ENCODE measurements at regions of chr9 and their contacts with region 1.

Region 1: DNA sequence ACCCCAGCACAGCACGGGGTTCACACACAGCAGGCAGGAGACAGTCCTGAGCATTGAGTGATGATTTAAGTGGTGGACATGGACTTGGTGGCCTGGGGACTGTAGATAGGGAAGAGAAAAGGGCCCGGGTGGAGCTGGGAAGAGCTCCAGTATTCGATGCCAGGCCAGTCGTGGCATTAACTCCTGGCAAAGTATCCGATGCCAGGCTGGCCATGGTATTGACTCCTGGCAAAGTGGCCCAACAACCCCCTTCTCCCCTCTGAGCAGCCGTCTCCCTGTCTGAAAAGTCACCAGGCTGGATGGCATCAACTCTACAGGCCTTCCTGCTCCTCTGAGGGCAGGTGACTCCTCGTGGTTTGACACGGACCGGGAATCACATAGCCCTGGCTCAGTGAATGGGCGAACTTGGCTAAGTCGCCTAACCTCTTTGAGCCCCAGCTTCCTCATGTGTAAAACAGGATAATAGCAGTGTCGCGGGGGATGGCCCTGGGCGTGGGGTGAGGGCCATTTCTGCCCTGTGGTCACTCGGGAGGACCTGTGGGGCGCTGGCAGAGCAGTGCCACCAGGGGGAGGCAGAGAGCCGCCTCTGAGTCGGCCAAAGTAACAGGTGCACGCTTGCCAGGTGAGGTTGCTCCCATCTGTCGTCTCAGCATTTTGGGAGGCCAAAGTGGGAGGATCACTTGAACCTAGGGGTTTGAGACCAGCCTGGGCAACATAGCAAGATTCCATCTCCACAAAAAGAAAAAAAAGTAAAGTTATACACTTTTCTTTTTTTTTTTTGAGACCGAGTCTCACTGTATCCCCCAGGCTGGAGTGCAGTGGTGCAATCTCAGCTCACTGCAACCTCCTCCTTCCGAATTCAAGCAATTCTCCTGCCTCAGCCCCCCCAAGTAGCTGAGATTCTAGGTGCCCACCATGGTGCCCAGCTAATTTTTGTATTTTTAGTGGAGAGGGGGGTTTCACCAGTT is 5.7 kb upstream of the SEC16A start:
- DNase-seq: peak; percentile 75 to 92
- ATAC-seq: peak; percentile 64
- H3K4me3 ChIP-seq: no peak overlapping the region
- H3K27ac ChIP-seq: no peak overlapping the region
- H3K4me1 ChIP-seq: no peaks in the 10 kb centered on the region
- H3K27me3 ChIP-seq: no peaks in the 10 kb centered on the region

Region 2: GRCh38 chr9:136474974-136475865 is 13.3 kb before region 1 on chr9:
- intact Hi-C with region 1: no loop called
- DNase-seq: no peak
- ATAC-seq: no peak
- H3K4me3 ChIP-seq: no peak overlapping the region
- H3K27ac ChIP-seq: no peak overlapping the region
- H3K4me1 ChIP-seq: no peaks in the 10 kb centered on the region
- H3K27me3 ChIP-seq: no peaks in the 10 kb centered on the region

Region 3: DNA sequence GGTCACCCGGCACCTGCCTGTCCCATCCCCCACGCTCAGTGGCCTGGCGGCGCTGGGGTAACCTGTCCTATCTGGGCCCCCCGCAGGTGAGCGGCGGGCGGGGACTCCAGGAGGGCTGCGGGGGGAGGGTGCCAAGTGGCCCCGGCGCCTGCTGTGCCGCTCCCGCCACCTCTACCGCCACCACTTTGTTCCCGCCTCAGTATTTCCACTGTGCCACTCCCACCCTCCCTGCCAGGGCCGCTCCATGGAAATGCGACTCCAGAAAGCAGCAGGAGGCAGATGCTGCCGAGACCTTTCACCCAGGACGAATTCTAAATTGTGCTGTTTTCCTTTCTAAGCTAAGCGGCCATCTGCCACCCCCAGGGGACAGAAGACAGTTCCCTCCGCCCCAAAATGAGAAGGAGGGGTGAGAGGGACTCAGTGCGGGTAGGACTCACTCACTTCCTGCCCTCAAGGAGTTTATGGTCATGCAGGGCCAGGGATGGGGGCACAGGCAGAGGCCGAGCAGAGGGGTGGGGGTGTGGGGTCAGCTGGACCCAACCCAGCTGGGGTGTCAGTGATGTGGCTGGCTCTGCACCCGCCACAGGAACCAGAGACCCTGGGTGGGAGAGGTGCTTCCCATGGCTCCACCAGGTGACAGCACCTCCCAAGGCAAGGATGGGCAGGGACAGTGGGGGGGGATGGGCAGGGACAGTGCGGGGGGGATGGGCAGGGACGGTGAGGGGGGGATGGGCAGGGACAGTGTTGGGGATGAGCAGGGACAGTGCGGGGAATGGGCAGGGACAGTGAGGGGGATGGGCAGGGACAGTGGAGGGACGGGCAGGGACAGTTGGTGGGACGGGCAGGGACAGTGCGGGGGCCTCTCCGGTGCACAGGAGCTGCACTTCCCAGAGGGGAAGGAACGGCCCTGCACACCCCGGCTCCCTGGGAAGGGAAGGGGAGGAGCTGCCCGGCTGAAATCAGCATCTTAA is 39.5 kb after region 1 on chr9:
- intact Hi-C with region 1: loop called (anchors 2 to 5 kb)
- DNase-seq: no peak
- ATAC-seq: no peak
- H3K4me3 ChIP-seq: no peak overlapping the region
- H3K27ac ChIP-seq: no peak overlapping the region
- H3K4me1 ChIP-seq: no peaks in the 10 kb centered on the region
- H3K27me3 ChIP-seq: no peaks in the 10 kb centered on the region

Region 4: GRCh38 chr9:136587145-136587943 is 98.8 kb after region 1 on chr9:
- intact Hi-C with region 1: no loop called
- DNase-seq: peak in 1 of 2 donors; percentile 86
- ATAC-seq: no peak
- H3K4me3 ChIP-seq: no peak overlapping the region
- H3K27ac ChIP-seq: no peak overlapping the region
- H3K4me1 ChIP-seq: no peaks in the 10 kb centered on the region
- H3K27me3 ChIP-seq: no peaks in the 10 kb centered on the region

Region 5: DNA sequence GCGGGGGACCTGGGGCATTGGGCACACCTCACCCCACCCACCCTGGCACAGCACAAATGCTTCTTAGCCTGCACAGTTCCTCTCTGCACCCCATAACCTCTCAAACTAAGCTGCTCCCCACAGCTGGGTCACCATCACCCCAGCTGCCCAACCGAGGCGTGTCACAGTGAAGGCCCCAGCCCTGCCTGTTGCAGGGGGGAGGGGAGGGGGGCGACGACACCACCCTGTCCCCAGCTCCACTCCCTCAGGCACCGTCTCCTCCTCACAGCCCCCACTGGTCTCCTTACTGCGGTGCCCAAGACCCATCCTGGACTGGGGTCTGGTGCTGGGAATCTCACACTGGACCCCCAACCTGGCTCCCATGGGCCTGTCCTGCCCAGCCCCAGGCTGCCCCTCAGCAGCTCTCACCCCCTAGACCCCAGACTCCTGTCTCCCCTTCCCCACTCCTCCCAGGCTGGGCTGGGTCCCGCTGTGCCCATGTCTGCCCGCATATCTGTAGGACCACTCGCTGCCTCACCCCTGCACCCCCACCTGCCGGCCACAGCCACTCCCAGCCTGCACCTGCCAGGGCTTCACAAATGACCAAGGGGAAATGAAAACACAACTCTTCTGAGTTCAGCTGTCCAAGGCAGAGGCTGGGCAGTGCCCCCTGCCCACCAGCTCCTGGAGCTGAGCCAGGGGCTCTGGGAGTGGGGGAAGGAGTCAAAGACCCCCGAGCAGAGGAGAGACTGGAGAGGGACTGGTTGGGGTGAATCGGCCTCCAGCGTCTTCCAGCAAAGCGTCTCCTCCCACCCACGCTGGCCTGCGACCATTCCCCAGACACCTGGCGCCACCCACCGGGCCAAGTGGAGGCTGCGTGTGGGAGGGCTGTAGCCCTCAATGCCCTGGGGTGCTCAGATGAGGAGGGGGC is 141.5 kb after region 1 on chr9:
- intact Hi-C with region 1: loop called (anchors 1 kb)
- DNase-seq: peak in 1 of 2 donors; percentile 71
- ATAC-seq: peak; percentile 53
- H3K4me3 ChIP-seq: no peak overlapping the region
- H3K27ac ChIP-seq: no peak overlapping the region
- H3K4me1 ChIP-seq: no peaks in the 10 kb centered on the region
- H3K27me3 ChIP-seq: no peaks in the 10 kb centered on the region

Region 6: DNA sequence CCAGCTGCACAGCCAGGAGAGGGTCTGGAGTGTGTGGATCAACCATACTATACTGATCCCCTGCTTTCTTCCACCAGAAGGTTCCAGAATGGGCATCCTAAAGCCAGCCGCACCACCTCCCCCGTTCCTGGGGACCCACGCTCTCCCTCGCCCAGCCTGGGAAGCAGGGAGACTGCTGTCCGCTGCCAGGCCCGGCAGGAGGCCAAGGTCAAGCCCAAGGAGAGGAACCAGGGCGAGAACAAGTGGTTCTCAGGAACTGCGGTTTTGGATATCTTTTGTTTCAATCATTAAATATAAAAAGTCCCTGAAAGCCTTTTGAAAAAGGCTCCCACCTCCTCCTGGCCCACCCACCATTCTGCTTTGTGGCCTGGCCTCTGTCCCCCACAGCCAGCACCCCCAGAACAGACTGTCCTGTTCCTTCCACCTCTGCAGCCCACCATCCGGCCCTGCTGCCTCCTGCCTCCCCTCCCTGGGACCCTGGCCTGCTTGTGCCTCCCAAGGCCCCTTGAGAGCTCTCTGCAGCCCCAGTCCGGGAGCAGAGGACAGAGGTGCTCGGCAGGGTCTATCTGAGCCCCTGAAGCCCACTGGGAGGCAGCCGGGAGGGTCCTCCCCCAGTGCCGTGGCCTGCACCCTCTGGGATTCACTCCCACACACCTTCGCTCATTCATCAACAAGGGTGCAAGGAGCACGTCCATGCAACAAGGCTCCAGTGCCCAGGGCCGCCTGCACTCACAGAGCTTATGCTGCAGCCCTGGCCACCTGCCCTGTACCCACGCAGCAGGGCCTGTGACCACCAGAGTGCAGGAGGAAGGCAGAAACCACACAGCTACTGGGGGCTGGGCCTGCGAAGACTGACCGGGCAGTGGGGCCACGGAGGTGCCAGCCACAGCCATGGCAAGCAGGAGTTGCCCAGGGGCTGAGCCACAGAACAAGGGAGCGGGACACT is 260.4 kb after region 1 on chr9:
- intact Hi-C with region 1: no loop called
- DNase-seq: no peak
- ATAC-seq: no peak
- H3K4me3 ChIP-seq: no peak overlapping the region
- H3K27ac ChIP-seq: no peak overlapping the region
- H3K4me1 ChIP-seq: no peaks in the 10 kb centered on the region
- H3K27me3 ChIP-seq: no peaks in the 10 kb centered on the region